Activated B cell treated with CpG ODN at 0.5 μM for 24 hours (primary cell): ENCODE measurements at regions of chr11 and their contacts with region 1.

Region 1: DNA sequence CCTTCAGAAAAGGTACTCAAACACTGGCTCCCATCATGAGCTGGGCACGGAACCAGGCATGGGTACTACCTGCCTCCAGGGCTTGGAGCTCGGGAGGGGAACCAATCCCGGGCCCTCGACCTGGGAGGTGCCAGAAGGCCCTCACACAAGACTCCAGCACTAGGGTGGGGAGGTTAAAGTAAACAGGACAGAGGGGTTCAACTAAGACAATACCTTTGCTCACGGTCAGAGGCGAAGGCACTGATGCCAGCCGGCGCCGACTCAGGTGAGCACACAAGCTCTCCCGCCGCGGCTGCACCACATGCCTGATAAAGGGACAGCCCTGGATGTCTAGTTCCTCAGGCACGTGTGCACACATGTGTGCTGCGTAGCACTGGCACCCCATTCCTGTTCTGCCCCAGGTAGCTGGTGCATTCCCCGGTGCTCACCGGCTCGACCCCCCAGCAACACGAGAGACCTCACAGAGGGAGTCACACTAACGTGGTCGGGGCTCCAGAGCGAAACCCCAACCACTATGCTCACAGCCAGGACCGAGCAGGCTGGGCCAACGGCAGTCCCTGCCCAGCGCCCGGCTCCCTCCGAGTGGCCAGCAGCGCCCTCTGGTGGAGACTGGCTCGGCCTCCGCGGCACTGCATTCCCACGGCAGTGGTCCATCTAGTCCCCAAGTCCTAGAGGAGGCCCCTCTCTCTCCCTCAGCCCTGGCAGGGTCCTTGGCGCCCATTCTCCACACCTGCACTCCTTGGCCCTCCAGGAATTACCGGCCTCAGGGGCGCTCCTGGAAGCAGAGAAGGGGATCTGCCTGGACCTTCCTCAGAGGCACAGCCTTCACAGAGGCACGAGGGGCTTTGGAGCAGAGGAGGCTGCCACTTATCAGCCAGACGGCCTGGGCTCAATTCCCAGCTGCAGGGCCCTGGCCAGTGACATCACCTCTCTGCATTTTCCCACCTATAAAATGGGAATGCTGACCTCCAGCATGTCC is 28.8 kb upstream of the MOB2 start:
- DNase-seq: peak; percentile 74
- ATAC-seq: peak; percentile 87
- H3K4me3 Mint-ChIP-seq: no peak overlapping the region
- H3K27ac Mint-ChIP-seq: no peak overlapping the region
- H3K4me1 Mint-ChIP-seq: peaks cover 52% of the 10 kb centered on the region
- H3K27me3 Mint-ChIP-seq: no peaks in the 10 kb centered on the region
- CTCF ChIP-seq: peak; percentile 53

Region 2: DNA sequence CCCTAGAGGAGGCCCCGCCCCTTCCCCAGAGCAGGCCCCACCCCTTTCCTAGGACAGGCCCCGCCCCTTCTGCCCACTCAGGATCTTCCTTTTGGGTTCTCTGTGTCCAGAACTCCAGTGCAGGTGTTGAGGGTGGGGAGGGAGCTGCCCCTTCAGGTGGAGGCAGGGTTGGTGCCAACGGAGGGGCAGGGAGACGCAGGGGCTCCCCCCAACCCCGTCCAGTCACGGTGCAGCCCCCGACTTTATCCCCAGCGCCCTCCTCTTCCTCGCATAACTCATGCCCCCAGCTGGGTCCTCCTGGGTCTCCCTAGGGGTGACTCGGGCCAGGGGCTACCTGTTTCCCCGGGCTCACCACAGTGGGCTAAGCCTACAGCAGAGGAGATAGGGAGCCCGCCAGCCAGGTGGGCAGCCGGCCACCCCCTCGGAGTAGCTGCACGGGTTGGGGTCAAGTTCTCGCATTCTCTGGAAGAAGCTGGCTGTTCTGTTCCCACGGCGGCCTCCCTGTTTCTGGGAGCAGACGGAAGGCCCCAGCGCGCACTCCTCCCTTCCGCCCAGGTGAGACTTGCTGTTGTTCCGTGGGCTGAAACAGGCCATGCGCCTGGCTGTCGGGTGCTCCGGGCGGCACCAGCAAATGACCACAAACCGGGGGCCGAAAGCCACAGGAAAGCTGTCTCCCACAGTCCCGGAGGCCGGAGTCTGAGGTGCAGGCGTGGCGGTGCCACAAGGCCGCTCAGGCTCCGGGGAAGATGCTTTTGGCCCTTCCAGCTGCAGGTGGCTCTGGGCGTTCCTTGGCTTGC is 401.8 kb before region 1 on chr11:
- CTCF ChIA-PET with region 1: no interaction called
- POLR2A ChIA-PET with region 1: no interaction called
- intact Hi-C with region 1: loop called (anchors 1 kb)
- DNase-seq: no peak
- ATAC-seq: no peak
- H3K4me3 Mint-ChIP-seq: no peak overlapping the region
- H3K27ac Mint-ChIP-seq: no peak overlapping the region
- H3K4me1 Mint-ChIP-seq: no peaks in the 10 kb centered on the region
- H3K27me3 Mint-ChIP-seq: peaks cover 3% of the 10 kb centered on the region
- CTCF ChIP-seq: no peak

Region 3: GRCh38 chr11:1202776-1203504 is 312.4 kb before region 1 on chr11:
- CTCF ChIA-PET with region 1: interaction called, 23 read pairs
- POLR2A ChIA-PET with region 1: no interaction called
- intact Hi-C with region 1: no loop called
- DNase-seq: peak; percentile 72
- ATAC-seq: peak; percentile 94
- H3K4me3 Mint-ChIP-seq: no peak overlapping the region
- H3K27ac Mint-ChIP-seq: no peak overlapping the region
- H3K4me1 Mint-ChIP-seq: no peaks in the 10 kb centered on the region
- H3K27me3 Mint-ChIP-seq: no peaks in the 10 kb centered on the region
- CTCF ChIP-seq: no peak

Region 4: GRCh38 chr11:1293631-1294030 is 221.7 kb before region 1 on chr11:
- CTCF ChIA-PET with region 1: interaction called, 12 read pairs
- POLR2A ChIA-PET with region 1: no interaction called
- intact Hi-C with region 1: no loop called
- DNase-seq: no peak
- ATAC-seq: peak; percentile 57
- H3K4me3 Mint-ChIP-seq: no peak overlapping the region
- H3K27ac Mint-ChIP-seq: no peak overlapping the region
- H3K4me1 Mint-ChIP-seq: no peaks in the 10 kb centered on the region
- H3K27me3 Mint-ChIP-seq: no peaks in the 10 kb centered on the region
- CTCF ChIP-seq: no peak

Region 5: GRCh38 chr11:1458340-1459218 is 56.8 kb before region 1 on chr11:
- CTCF ChIA-PET with region 1: no interaction called
- POLR2A ChIA-PET with region 1: no interaction called
- intact Hi-C with region 1: loop called (anchors 2 kb)
- DNase-seq: no peak
- ATAC-seq: no peak
- H3K4me3 Mint-ChIP-seq: no peak overlapping the region
- H3K27ac Mint-ChIP-seq: no peak overlapping the region
- H3K4me1 Mint-ChIP-seq: no peaks in the 10 kb centered on the region
- H3K27me3 Mint-ChIP-seq: no peaks in the 10 kb centered on the region
- CTCF ChIP-seq: no peak